Adrenal gland (tissue), 19 donors: ENCODE measurements at regions of chr5 and their contacts with region 1.

Region 1: DNA sequence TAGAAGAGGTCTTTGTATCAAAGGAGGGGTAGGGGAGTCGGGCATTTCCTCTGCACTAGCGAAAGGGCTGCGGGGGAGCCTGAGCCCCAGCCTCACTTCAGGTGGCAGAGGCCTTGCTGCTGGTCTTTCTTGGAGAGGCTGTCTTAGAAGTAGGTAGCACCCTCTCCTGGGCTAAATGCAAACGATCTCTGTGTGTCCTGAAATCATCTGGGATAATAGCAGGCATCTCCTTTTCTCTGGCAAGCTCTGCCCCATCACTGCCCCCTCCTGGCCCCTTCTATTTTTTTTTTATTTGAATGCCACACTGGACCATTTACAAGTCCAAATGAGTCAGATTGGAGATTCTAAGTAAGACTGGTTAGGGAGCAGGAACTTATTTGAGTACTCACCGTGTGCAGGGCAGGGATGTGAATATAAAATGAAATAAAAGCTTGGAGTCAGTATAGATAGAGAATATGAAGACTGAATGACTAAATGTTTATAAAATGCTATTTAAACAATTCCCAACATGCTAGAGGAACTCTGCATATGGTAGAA is 137.1 kb downstream of the FGF1 start:
- DNase-seq: peak; percentile 66 to 91 (median 79)
- H3K4me3 ChIP-seq: no peak overlapping the region
- H3K27ac ChIP-seq: peak overlapping the region in 2 of 5 donors; percentile 28 to 33
- H3K4me1 ChIP-seq: peaks cover 5 to 9% of the 10 kb centered on the region in 2 donors
- H3K27me3 ChIP-seq: no peaks in the 10 kb centered on the region
- CTCF ChIP-seq: peak; percentile 70 to 98 (median 85)
- POLR2A ChIP-seq: no peak

Region 2: GRCh38 chr5:142000703-142001484 is 547.9 kb before region 1 on chr5:
- intact Hi-C with region 1: loop called in 1 of 2 experiments (anchors 10 kb)
- DNase-seq: no peak
- H3K4me3 ChIP-seq: no peak overlapping the region
- H3K27ac ChIP-seq: no peak overlapping the region
- H3K4me1 ChIP-seq: no peaks in the 10 kb centered on the region
- H3K27me3 ChIP-seq: no peaks in the 10 kb centered on the region
- CTCF ChIP-seq: peak in 4 of 6 experiments; percentile 5 to 35 (median 22)
- POLR2A ChIP-seq: no peak

Region 3: DNA sequence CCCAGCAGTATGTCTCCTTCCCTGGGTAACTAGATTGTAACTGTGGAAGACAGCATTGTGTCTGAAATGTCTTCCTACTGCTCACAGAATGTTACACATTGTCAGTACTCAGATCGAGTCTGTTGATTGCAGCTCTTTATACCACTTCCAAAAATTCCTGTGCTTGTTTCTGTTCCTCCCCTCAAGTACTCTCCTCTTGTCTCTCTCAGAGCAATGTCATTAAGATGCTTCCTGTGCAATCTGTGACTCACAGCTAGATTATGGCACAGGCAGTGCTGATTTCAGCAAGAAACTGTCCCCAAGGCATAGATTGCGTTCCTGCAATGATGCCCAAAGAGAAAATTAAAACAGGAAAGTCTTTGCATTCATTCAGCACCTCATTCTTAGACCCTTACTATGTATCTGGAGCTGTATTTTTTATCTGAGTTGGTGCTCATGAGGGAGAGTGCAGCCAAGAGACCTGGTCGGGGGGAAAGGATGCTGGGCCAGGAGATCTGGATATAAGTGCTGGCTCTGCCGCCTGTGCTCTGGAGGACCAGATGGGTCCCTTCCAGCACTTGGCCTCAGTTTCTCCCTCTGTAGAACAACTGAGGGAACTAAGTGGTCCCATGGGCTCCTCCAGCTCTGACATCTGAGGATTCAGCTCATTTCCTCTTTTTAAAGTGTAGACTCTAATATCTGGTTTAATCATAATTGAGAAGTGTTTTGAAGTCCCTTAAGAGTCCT is 495.2 kb before region 1 on chr5:
- intact Hi-C with region 1: no loop called
- DNase-seq: peak in 5 of 7 donors; percentile 20 to 65 (median 42)
- H3K4me3 ChIP-seq: no peak overlapping the region
- H3K27ac ChIP-seq: peak overlapping the region in 2 of 5 donors; percentile 34 to 69
- H3K4me1 ChIP-seq: peaks cover 0 to 11% of the 10 kb centered on the region in 2 donors
- H3K27me3 ChIP-seq: no peaks in the 10 kb centered on the region
- CTCF ChIP-seq: no peak
- POLR2A ChIP-seq: peak in 1 of 2 donors; percentile 11

Region 4: GRCh38 chr5:142151436-142152383 is 397.1 kb before region 1 on chr5:
- intact Hi-C with region 1: loop called in 1 of 2 experiments (anchors 5 kb)
- DNase-seq: peak; percentile 49 to 87 (median 56)
- H3K4me3 ChIP-seq: no peak overlapping the region
- H3K27ac ChIP-seq: no peak overlapping the region
- H3K4me1 ChIP-seq: peaks cover 0 to 2% of the 10 kb centered on the region in 2 donors
- H3K27me3 ChIP-seq: no peaks in the 10 kb centered on the region
- CTCF ChIP-seq: peak; percentile 69 to 89 (median 84)
- POLR2A ChIP-seq: no peak

Region 5: DNA sequence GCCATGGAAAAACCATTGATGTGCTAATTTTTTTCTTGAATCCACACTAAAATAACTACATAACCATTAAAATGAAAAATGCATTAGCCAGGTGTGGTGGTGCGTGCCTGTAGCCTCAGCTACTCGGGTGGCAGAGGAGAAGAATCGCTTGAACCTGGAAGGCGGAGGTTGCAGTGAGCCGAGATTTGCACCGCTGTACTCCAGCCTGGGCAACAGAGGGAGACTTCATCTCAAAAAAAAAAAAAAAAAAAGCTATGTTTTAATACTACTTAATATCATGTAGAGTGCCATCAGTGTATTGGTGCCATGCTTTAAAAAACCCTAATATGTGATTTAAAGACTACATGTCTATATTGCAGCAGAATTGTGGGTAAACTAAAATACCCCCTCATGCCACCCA is 381.3 kb before region 1 on chr5:
- intact Hi-C with region 1: loop called in 1 of 2 experiments (anchors 10 kb)
- DNase-seq: no peak
- H3K4me3 ChIP-seq: no peak overlapping the region
- H3K27ac ChIP-seq: no peak overlapping the region
- H3K4me1 ChIP-seq: no peaks in the 10 kb centered on the region
- H3K27me3 ChIP-seq: no peaks in the 10 kb centered on the region
- CTCF ChIP-seq: no peak
- POLR2A ChIP-seq: no peak

Region 6: DNA sequence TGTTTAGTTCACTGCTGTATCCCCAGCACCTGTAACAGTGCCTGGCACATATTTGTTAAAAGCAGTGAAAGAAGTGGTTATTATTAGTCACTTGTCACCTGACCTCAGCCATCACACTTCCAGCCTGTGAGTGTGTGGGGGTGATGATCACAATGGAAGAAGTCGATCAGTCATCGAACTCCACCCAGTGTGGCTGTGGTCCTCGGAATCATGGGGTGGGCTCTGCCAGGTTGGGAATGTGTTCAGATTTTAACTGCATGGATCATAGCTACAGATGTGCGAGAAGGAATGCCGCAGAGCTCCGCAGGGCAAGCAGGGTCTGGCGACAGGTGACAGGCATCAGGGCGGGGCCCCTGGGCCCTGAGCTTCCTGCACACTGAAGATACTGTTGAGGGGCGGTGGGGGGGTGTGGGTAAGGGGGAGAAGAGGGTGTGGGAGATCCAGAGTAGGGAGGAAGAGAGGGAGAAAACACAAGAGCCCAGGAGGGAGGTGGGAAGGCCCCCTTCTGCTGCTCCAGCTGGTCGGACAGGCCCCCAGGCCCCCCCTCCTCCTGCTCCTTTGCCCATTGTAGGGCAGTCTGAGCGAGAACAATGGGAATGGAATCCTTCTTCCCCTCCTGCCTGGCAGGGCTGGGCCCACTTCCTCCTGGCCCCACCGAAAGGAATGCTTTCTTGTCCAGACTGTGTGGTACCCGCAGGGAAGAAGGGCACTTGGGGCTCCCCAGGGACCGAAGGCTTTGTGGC is 313.6 kb before region 1 on chr5:
- intact Hi-C with region 1: no loop called
- DNase-seq: peak in 1 of 7 donors; percentile 20
- H3K4me3 ChIP-seq: no peak overlapping the region
- H3K27ac ChIP-seq: no peak overlapping the region
- H3K4me1 ChIP-seq: no peaks in the 10 kb centered on the region
- H3K27me3 ChIP-seq: no peaks in the 10 kb centered on the region
- CTCF ChIP-seq: no peak
- POLR2A ChIP-seq: no peak

Region 7: GRCh38 chr5:142324871-142325724 is 223.7 kb before region 1 on chr5 and contains the start of gene SPRY4:
- intact Hi-C with region 1: loop called (anchors 10 kb)
- DNase-seq: peak; percentile 93 to 97 (median 94)
- H3K4me3 ChIP-seq: peak within 1 kb of the TSS; percentile 47 to 74 (median 61)
- H3K27ac ChIP-seq: peak within 1 kb of the TSS; percentile 8 to 96 (median 91)
- H3K4me1 ChIP-seq: peaks cover 20 to 51% of the 10 kb centered on the region in 2 donors
- H3K27me3 ChIP-seq: no peaks in the 10 kb centered on the region
- CTCF ChIP-seq: peak in 1 of 6 experiments; percentile 14
- POLR2A ChIP-seq: peak; percentile 97 to 98
- total RNA-seq, gene SPRY4: 12.1 to 66.1 (median 37.2) TPM

Region 8: GRCh38 chr5:142364251-142365145 is 184.3 kb before region 1 on chr5:
- intact Hi-C with region 1: loop called in 1 of 2 experiments (anchors 10 kb)
- DNase-seq: peak; percentile 47 to 91 (median 70)
- H3K4me3 ChIP-seq: no peak overlapping the region
- H3K27ac ChIP-seq: peak overlapping the region in 3 of 5 donors; percentile 32 to 92 (median 67)
- H3K4me1 ChIP-seq: peaks cover 18 to 41% of the 10 kb centered on the region in 2 donors
- H3K27me3 ChIP-seq: no peaks in the 10 kb centered on the region
- CTCF ChIP-seq: no peak
- POLR2A ChIP-seq: peak in 1 of 2 donors; percentile 37